ENCODE measurements at regions of chr17 and their contacts with region 1.

Region 1: GRCh38 chr17:28540231-28540630 is 12.2 kb downstream of the UNC119 start:
- DNase-seq: no peak
- H3K4me3 ChIP-seq: no peak overlapping the region
- H3K27me3 ChIP-seq: peaks cover 2% of the 10 kb centered on the region
- CTCF ChIP-seq: no peak

Region 2: DNA sequence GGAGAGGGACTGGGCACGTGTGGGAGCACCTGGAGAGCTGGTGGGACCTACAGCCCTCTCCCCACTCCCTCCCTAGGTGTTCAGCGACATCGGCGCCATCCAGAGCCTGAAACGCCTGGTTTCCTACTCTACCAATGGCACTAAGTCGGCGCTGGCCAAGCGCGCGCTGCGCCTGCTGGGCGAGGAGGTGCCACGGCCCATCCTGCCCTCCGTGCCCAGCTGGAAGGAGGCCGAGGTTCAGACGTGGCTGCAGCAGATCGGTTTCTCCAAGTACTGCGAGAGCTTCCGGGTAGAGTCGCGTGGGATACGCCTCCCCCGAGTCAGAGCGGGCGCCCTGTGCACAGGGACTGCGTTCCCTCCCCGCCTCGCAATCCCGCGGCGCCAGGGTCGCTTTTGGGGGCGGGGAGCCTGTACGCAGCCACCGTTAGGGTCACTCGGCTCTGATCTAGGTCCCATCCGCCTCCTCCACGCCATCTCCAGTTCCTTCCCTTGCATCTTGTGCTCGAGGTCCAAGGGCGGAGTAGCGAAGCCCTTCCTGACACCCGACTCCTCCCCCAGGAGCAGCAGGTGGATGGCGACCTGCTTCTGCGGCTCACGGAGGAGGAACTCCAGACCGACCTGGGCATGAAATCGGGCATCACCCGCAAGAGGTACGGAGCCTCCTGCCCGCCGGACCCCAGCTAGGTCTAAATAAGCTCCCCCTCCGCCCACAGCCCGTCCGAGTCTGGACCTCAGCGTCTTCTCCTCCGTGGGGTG is 155.8 kb before region 1 on chr17:
- CTCF ChIA-PET with region 1: no interaction called
- POLR2A ChIA-PET with region 1: no interaction called
- DNase-seq: no peak
- H3K4me3 ChIP-seq: no peak overlapping the region
- H3K27me3 ChIP-seq: no peaks in the 10 kb centered on the region
- CTCF ChIP-seq: no peak

Region 3: DNA sequence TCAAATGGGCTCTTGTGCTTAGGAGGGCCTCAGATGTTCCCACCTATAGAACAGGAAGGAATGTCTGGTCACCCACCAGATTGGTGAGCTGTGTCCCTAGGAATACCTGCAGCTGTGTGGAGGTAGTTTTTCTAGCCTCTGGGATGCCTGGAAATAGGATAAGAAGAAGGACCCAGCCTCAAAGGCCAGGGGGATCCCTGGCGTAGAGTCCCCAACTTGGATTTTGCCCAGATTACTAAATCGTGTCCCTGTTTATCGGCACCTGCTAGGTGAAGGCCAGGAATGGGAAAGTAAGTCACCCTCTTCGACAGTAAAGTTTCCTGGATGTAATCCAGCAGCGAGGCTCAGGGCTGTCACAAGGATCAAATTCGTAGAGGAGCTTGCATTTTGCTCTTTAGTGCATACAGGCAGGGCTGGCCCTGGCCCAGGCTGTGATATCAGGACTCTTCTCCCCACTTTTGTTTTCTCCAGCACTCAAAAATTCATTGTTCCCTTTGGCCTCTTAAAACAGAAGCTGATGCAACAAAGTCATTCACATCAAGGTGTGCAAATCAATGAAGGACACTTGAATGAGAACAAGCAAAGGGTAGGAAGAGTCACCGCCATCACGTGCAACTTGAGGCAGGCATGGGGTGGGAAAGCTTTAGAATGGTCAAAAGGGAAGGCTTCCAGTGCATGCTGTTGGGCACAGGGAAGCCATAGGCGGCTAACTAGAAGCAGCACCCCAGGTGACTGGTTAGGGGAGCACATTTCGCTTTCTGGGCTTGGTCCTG is 59.2 kb before region 1 on chr17:
- CTCF ChIA-PET with region 1: no interaction called
- POLR2A ChIA-PET with region 1: no interaction called
- DNase-seq: no peak
- H3K4me3 ChIP-seq: no peak overlapping the region
- H3K27me3 ChIP-seq: peaks cover 11% of the 10 kb centered on the region
- CTCF ChIP-seq: no peak

Region 4: DNA sequence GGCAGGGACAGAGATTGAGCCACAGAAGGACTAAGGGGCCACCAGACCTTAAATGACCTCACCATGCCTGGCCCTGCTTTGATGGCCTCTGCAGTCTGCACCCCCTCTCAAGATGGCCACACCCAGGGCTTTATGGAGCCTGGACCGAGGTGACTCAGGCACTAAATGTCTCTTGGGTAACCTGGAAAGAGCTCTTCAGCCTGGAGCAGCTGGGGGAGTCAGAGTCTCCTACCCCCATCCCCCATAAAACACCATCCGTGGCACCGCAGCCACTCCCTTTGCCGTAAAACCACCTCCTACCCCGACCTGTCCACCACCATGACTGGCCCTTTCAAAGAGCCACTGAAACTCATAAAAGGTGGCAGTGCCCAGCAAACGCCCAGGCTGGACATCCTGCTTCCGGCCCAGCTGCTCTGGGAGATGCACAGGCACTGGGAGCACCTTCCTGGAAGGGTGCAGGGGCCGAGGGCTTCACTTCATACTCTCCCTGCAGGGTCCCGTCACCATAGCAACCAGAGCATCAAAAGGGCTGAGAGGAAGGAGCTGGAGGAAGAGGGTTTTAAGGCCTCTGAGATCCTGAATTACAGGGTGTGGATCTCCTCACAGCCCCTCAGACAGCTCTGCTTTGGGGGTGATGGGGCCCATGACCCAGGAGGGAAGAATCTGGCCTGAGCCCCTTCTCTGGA is 11.8 kb before region 1 on chr17:
- CTCF ChIA-PET with region 1: interaction called, 19 read pairs
- POLR2A ChIA-PET with region 1: no interaction called
- DNase-seq: no peak
- H3K4me3 ChIP-seq: no peak overlapping the region
- H3K27me3 ChIP-seq: peaks cover 2% of the 10 kb centered on the region; the same call in 1 of the 2 replicates
- CTCF ChIP-seq: no peak

Region 5: GRCh38 chr17:28552246-28552999 is 12.2 kb after region 1 on chr17 and contains the start of gene UNC119:
- CTCF ChIA-PET with region 1: interaction called, 27 read pairs
- POLR2A ChIA-PET with region 1: no interaction called
- DNase-seq: no peak
- H3K4me3 ChIP-seq: peak within 1 kb of the TSS; percentile 55
- H3K27me3 ChIP-seq: no peaks in the 10 kb centered on the region
- CTCF ChIP-seq: no peak
- polyA plus RNA-seq, gene UNC119: 82.8 and 150 TPM in 2 replicates